ENCODE measurements at regions of chr19 and their contacts with region 1.

Region 1: DNA sequence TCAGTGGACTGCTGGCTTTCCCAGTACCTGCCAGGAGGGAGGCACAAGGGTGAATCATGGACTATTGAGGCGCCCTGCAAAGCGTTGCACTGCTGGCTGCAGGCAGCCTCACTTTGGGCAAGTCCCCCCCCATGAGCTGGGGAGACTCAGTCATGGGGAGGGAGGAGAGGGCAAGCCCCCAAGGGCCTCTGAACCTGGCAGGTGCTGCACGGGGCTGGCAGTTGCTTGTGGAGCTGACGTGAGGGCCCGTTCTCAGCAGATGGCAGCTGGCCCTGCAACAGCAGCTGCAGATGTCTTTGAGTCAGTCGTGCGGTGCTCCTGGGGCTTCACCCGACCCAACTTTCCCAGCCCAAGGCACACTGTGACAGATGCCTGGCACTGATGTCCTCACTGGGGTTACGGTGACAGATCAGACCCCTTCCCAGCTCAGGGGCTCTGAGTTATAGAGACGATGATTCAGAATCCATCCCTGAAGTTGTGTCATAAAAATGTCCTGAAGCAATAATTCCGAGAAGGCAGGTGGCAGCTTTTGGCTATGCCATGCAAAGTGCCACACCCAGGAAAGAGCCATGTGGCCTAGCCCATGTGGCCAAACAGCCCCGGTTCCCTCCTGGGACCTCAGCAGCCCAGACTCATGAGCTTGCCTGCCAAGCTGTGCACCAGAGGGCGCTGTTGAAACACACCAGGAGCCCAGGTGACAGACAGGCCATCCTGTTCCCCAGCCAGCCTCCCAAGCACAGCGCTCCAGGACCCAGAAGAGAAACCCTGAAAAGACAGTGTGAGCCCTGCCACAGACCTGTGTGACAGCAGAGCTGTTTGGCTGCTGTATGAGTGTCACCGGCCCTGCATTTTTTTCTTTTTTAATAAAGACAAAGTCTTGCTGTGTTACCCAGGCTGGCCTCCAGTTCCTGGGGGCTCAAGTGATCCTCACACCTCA is 53.6 kb upstream of the LDLR start:
- DNase-seq: peak; percentile 94
- H3K4me3 ChIP-seq: no peak overlapping the region
- H3K27ac ChIP-seq: peak overlapping the region; percentile 73
- H3K4me1 ChIP-seq: peaks cover 19% of the 10 kb centered on the region
- CTCF ChIP-seq: peak; percentile 95

Region 2: DNA sequence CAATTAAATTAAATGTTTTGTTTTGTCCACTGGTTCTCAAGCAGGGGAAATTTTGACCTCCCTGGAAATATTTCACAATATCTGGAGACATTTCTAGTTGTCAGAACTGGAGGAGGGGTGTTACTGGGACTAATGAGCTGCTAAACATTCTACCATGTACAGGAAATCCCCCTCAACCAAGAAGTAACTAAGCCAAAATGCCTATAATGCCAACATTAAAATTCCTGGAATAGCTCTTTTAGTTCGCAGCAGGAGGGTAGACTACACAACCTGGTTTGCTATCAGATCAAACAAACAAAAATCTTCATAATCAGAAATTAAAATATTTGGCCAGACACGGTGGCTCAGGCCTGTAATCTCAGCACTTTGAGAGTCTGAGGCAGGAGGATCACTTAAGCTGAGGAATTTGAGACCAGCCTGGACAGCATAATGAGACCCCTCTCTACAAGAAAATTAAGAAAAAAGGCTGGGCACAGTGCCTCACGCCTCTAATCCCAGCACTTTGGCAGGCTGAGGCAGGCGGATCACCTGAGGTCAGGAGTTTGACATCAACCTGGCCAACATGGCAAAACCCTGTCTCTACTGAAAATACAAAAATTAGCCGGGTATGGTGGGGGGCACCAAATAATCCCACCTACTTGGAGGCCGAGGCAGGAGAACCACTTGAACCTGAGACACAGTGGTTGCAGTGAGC is 88.6 kb before region 1 on chr19:
- CTCF ChIA-PET with region 1: interaction called, 3 read pairs
- POLR2A ChIA-PET with region 1: interaction called, 3 read pairs
- intact Hi-C with region 1: loop called (anchors 1 kb)
- DNase-seq: no peak
- H3K4me3 ChIP-seq: no peak overlapping the region
- H3K27ac ChIP-seq: no peak overlapping the region
- H3K4me1 ChIP-seq: peaks cover 23% of the 10 kb centered on the region
- CTCF ChIP-seq: no peak

Region 3: DNA sequence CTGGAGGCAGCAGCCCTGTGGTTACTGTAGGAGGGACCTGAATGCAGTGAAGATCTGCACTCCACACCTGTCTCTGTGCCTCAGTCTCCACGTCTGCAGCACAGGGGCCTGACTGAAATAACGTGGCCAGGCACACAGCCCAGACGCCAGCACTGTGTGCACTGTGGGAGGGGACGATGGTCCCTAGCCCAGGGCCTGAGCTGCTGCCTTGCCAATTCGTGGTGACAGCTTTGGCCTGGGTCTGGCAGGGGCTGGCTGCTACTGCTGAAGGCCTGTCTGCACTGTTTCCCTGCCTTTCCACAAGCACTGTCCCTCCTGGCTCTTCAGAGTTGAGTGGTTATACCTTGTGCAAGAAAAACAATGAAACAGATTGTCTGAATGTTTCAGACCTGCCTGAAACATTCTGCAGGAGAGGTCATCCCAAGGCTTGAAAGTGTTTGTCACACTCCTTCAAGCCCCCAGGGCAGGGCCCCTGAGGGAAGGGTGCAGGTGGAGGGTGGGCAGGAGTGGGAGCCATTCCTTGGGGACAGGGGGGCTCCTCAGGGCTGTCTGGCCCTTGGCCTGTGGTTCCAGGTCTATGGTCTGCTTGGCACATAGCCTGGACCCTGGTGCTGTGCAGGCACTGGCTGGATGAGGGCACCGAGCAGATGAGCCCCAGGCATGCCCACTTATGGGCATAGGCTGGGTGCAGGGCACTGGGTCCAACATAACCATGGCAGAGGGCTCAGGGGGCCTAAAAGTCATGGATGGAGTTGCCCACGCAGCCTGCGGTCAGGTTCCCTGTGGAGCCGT is 14.8 kb after region 1 on chr19:
- CTCF ChIA-PET with region 1: no interaction called
- POLR2A ChIA-PET with region 1: interaction called, 4 read pairs
- intact Hi-C with region 1: loop called (anchors 1 kb)
- DNase-seq: no peak
- H3K4me3 ChIP-seq: no peak overlapping the region
- H3K27ac ChIP-seq: peak overlapping the region; percentile 91
- H3K4me1 ChIP-seq: peaks cover 83% of the 10 kb centered on the region
- CTCF ChIP-seq: no peak

Region 4: DNA sequence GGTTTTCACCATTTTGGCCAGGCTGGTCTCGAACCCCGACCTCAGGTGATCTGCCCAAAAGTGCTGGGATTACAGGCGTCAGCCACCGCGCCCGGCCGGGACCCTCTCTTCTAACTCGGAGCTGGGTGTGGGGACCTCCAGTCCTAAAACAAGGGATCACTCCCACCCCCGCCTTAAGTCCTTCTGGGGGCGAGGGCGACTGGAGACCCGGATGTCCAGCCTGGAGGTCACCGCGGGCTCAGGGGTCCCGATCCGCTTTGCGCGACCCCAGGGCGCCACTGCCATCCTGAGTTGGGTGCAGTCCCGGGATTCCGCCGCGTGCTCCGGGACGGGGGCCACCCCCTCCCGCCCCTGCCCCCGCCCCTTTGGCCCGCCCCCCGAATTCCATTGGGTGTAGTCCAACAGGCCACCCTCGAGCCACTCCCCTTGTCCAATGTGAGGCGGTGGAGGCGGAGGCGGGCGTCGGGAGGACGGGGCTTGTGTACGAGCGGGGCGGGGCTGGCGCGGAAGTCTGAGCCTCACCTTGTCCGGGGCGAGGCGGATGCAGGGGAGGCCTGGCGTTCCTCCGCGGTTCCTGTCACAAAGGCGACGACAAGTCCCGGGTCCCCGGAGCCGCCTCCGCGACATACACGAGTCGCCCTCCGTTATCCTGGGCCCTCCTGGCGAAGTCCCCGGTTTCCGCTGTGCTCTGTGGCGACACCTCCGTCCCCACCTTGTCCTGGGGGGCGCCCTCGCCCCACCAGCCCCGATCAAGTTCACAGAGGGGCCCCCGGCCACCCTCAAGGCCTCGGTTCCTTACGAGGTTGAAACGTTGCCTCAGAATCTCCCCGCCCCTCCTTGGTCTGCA is 54.6 kb after region 1 on chr19:
- CTCF ChIA-PET with region 1: interaction called, 3 read pairs
- POLR2A ChIA-PET with region 1: interaction called, 3 read pairs
- intact Hi-C with region 1: loop called (anchors 1 kb)
- DNase-seq: peak; percentile 98
- H3K4me3 ChIP-seq: peak overlapping the region; percentile 82
- H3K27ac ChIP-seq: peak overlapping the region; percentile 91
- H3K4me1 ChIP-seq: peaks cover 48% of the 10 kb centered on the region
- CTCF ChIP-seq: no peak; the same call in 1 of the 2 replicates

Region 5: GRCh38 chr19:11125994-11126685 is 90.4 kb after region 1 on chr19:
- CTCF ChIA-PET with region 1: interaction called, 3 read pairs
- POLR2A ChIA-PET with region 1: no interaction called
- intact Hi-C with region 1: loop called (anchors 2 kb)
- DNase-seq: peak; percentile 82
- H3K4me3 ChIP-seq: no peak overlapping the region
- H3K27ac ChIP-seq: no peak overlapping the region
- H3K4me1 ChIP-seq: no peaks in the 10 kb centered on the region
- CTCF ChIP-seq: peak; percentile 90

Region 6: DNA sequence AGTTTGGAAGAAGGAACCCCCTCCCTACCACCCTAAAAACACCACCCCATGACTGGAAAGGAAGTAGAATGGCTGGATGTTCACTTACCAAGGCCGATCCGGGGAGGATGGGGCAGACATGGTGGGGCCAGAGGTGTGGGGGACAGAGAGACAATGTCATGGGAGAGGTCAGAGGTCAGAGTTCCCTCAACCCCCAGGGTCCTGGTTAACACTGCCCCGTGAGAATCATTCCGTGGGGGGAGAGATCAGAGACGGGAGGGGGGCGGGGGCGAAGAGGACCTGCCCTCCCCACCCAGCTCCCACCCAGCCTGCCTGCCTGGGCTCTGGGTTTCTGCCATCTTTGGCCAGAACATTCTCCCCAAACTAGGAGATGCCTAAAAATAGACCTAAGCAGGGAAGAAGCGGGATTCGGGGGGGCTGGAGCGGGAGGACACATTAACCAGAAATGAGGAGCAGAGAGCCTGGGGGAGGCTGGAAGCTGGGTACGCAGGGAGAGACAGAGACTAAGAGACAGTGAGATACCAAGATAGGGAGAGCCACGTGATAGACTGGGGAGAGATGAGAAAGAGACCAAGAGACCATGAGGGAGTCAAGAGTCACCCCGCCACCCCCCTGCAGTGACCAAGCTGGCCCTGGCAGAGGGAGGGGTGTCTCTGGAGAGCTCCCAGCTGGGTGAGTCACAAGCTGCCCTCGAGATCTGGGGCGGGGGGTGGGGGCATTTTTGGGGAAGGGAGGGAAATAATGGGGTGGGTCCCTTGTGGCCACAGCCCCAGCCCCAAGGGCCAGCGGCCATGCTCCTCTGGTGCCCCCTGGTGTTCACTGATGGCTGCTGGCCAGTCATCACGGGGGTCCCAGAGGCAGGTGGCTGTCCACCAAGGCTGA is 167.7 kb after region 1 on chr19:
- CTCF ChIA-PET with region 1: no interaction called
- POLR2A ChIA-PET with region 1: no interaction called
- intact Hi-C with region 1: loop called (anchors 5 kb)
- DNase-seq: peak; percentile 58
- H3K4me3 ChIP-seq: no peak overlapping the region
- H3K27ac ChIP-seq: no peak overlapping the region
- H3K4me1 ChIP-seq: peaks cover 51% of the 10 kb centered on the region
- CTCF ChIP-seq: peak; percentile 83

Measured in OCI-LY7 (cell line).